ENCODE measurements at regions of chr9 and their contacts with region 1.

Region 1: DNA sequence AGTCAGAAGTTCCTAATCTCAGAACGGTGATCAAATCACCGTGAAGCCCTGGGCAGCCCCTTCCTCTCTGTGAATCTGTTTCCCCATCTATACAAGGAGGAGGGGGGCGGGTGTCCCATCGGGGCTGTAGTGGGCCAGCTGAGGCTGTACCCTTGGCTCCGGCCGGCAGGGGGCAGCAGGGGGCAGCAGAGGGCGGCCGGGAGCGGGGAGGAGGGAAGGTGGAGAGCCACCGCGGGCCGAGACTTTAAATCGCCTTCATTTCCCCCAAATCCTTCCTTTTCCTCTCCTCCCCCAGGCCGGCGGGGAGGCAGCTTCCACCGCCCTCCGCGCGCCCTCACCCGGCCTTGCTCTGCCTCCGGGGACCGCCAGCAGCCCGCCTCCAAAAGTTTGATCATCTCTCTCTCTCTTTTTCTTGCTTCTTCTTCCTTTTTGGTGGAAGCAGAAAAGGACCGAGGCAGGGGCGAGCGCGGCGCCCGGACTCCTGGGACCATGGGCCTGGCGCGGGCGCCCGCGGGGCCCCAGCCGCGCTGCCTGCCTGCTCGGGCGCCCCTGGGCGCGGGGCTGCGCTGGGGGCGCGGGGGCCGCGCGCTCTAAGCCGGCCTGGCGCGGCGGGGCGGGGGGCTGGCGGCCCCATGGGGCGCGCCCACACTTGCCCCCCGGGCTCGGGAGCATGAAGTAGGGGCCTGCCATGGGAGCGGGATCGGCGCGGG is at the start of gene COL27A1:
- DNase-seq: peak; percentile 76 to 82
- ATAC-seq: peak; percentile 80 to 90
- H3K4me3 ChIP-seq: peak within 1 kb of the TSS; percentile 92
- H3K27ac ChIP-seq: peak within 1 kb of the TSS; percentile 69 to 96
- H3K4me1 ChIP-seq: peaks cover 23% of the 10 kb centered on the region
- CTCF ChIP-seq: peak; percentile 81
- EP300 ChIP-seq: no peak
- POLR2A ChIP-seq: peak; percentile 39; the same call in 1 of the 2 replicates
- RAD21 ChIP-seq: peak; percentile 76 to 84
- polyA plus RNA-seq, gene COL27A1: 6.9 and 8.5 TPM in 2 replicates

Region 2: DNA sequence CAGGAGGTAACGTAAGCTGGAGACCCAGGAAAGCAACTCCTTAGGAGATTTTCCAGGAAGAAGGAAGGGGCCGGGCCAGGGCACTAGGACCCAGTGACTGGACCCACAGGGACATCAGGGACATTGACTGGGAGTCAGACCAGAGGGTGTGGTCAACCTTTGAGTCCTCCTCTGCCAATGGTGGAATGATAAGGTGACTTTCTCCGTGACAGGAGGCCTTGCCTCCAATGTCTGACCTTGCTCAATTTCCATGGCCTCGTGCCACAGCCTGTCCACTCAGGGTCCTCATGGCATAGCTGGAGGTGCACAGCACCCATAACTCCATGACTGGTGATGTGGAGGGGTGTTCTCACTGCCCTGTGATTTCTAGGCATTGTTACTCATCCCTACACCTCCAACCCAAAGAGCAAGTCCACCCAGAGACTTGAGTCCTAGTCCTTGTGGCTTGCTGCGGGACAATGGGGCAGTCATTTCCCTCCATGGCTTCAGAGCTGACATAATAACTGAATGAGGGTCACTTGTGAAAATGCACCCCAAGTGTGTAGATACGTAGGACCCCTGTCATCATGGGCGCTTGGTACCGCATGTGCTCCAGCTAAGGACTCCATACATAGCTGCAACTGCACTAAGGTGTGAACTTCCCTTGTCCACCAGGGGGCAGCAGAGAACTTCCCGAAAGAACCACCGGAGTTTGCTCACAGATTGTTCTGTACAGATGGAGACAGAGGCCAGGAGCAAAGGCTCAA is 73.2 kb before region 1 on chr9:
- CTCF ChIA-PET with region 1: interaction called, 25 read pairs
- POLR2A ChIA-PET with region 1: no interaction called
- DNase-seq: peak; percentile 92 to 94
- ATAC-seq: peak; percentile 74 to 83
- H3K4me3 ChIP-seq: no peak overlapping the region
- H3K27ac ChIP-seq: peak overlapping the region; percentile 93 to 94
- H3K4me1 ChIP-seq: peaks cover 75% of the 10 kb centered on the region
- CTCF ChIP-seq: peak; percentile 92
- EP300 ChIP-seq: no peak
- POLR2A ChIP-seq: no peak
- RAD21 ChIP-seq: peak; percentile 93 to 95

Region 3: GRCh38 chr9:114117996-114118830 is 37.2 kb before region 1 on chr9:
- CTCF ChIA-PET with region 1: interaction called, 10 read pairs
- POLR2A ChIA-PET with region 1: no interaction called
- DNase-seq: no peak
- ATAC-seq: no peak
- H3K4me3 ChIP-seq: no peak overlapping the region
- H3K27ac ChIP-seq: no peak overlapping the region
- H3K4me1 ChIP-seq: peaks cover 9% of the 10 kb centered on the region
- CTCF ChIP-seq: no peak
- EP300 ChIP-seq: no peak
- POLR2A ChIP-seq: no peak
- RAD21 ChIP-seq: no peak

Region 4: GRCh38 chr9:114141553-114142402 is 13.6 kb before region 1 on chr9:
- CTCF ChIA-PET with region 1: interaction called, 98 read pairs
- POLR2A ChIA-PET with region 1: no interaction called
- DNase-seq: no peak
- ATAC-seq: no peak; a peak in 1 of 6 replicates
- H3K4me3 ChIP-seq: no peak overlapping the region
- H3K27ac ChIP-seq: no peak overlapping the region
- H3K4me1 ChIP-seq: 0 out of 3 replicates have a peak, but pooled peaks cover 7% of the 10 kb centered on the region
- CTCF ChIP-seq: no peak
- EP300 ChIP-seq: no peak
- POLR2A ChIP-seq: no peak
- RAD21 ChIP-seq: no peak

Region 5: GRCh38 chr9:114174876-114175771 is 19.7 kb after region 1 on chr9:
- CTCF ChIA-PET with region 1: interaction called, 29 read pairs
- POLR2A ChIA-PET with region 1: no interaction called
- DNase-seq: no peak
- ATAC-seq: peak in 1 of 2 experiments; percentile 27; a peak in 3 of 6 replicates
- H3K4me3 ChIP-seq: no peak overlapping the region
- H3K27ac ChIP-seq: peak overlapping the region in 1 of 2 experiments; percentile 32; a peak in 1 of 6 replicates
- H3K4me1 ChIP-seq: peaks cover 30% of the 10 kb centered on the region
- CTCF ChIP-seq: no peak
- EP300 ChIP-seq: no peak
- POLR2A ChIP-seq: no peak
- RAD21 ChIP-seq: no peak

Region 6: GRCh38 chr9:114276908-114277821 is 121.7 kb after region 1 on chr9:
- CTCF ChIA-PET with region 1: interaction called, 11 read pairs
- POLR2A ChIA-PET with region 1: no interaction called
- DNase-seq: no peak
- ATAC-seq: no peak
- H3K4me3 ChIP-seq: no peak overlapping the region
- H3K27ac ChIP-seq: peak overlapping the region; percentile 86 to 94
- H3K4me1 ChIP-seq: peaks cover 55% of the 10 kb centered on the region
- CTCF ChIP-seq: no peak
- EP300 ChIP-seq: no peak
- POLR2A ChIP-seq: no peak
- RAD21 ChIP-seq: no peak

Region 7: GRCh38 chr9:114291064-114291474 is 135.7 kb after region 1 on chr9:
- CTCF ChIA-PET with region 1: interaction called, 181 read pairs
- POLR2A ChIA-PET with region 1: interaction called, 5 read pairs
- DNase-seq: peak; percentile 57 to 64
- ATAC-seq: peak; percentile 32 to 69; a peak in 4 of 6 replicates
- H3K4me3 ChIP-seq: no peak overlapping the region
- H3K27ac ChIP-seq: peak overlapping the region; percentile 63 to 88
- H3K4me1 ChIP-seq: peaks cover 39% of the 10 kb centered on the region
- CTCF ChIP-seq: peak; percentile 91
- EP300 ChIP-seq: no peak
- POLR2A ChIP-seq: no peak
- RAD21 ChIP-seq: peak; percentile 94 to 96